HepG2 (cell line): ENCODE measurements at regions of chr4 and their contacts with region 1.

Region 1: GRCh38 chr4:184347251-184348239 is 126.8 kb downstream of the IRF2 start:
- DNase-seq: no peak
- ATAC-seq: peak; percentile 1; the same call in 2 of the 3 replicates
- H3K4me3 ChIP-seq: peak overlapping the region; percentile 47 to 71 (median 62)
- H3K27ac ChIP-seq: peak overlapping the region; percentile 100
- H3K4me1 ChIP-seq: peaks cover 91% of the 10 kb centered on the region
- H3K27me3 ChIP-seq: no peaks in the 10 kb centered on the region
- CTCF ChIP-seq: no peak
- EP300 ChIP-seq: no peak
- POLR2A ChIP-seq: peak; percentile 25 to 37; a peak in 2 of 4 replicates
- RAD21 ChIP-seq: no peak

Region 2: GRCh38 chr4:184168406-184169019 is 179.0 kb before region 1 on chr4:
- CTCF ChIA-PET with region 1: no interaction called
- POLR2A ChIA-PET with region 1: no interaction called
- in situ Hi-C with region 1: no loop called
- intact Hi-C with region 1: no loop called
- DNase-seq: peak; percentile 26
- ATAC-seq: peak; percentile 98
- H3K4me3 ChIP-seq: no peak overlapping the region
- H3K27ac ChIP-seq: no peak overlapping the region
- H3K4me1 ChIP-seq: no peaks in the 10 kb centered on the region
- H3K27me3 ChIP-seq: peaks cover 0 to 8% of the 10 kb centered on the region in 2 experiments; a peak in 2 of 5 replicates
- CTCF ChIP-seq: peak; percentile 95
- EP300 ChIP-seq: no peak
- POLR2A ChIP-seq: no peak
- RAD21 ChIP-seq: peak; percentile 96

Region 3: GRCh38 chr4:184287697-184288255 is 59.8 kb before region 1 on chr4:
- CTCF ChIA-PET with region 1: no interaction called
- POLR2A ChIA-PET with region 1: interaction called, 5 read pairs
- in situ Hi-C with region 1: no loop called
- intact Hi-C with region 1: loop called (anchors 5 kb)
- DNase-seq: peak; percentile 64
- ATAC-seq: peak; percentile 92
- H3K4me3 ChIP-seq: peak overlapping the region; percentile 38 to 47 (median 44); a peak in 5 of 6 replicates
- H3K27ac ChIP-seq: peak overlapping the region; percentile 44
- H3K4me1 ChIP-seq: peaks cover 58% of the 10 kb centered on the region
- H3K27me3 ChIP-seq: no peaks in the 10 kb centered on the region
- CTCF ChIP-seq: peak; percentile 75
- EP300 ChIP-seq: no peak; a peak in 1 of 4 replicates
- POLR2A ChIP-seq: no peak
- RAD21 ChIP-seq: peak; percentile 43; the same call in 1 of the 2 replicates

Region 4: GRCh38 chr4:184364100-184364921 is 16.8 kb after region 1 on chr4:
- CTCF ChIA-PET with region 1: no interaction called
- POLR2A ChIA-PET with region 1: interaction called, 34 read pairs
- in situ Hi-C with region 1: no loop called
- intact Hi-C with region 1: loop called (anchors 1 kb)
- DNase-seq: peak; percentile 97
- ATAC-seq: peak; percentile 97
- H3K4me3 ChIP-seq: peak overlapping the region in 1 of 3 experiments; percentile 43; a peak in 2 of 6 replicates
- H3K27ac ChIP-seq: peak overlapping the region; percentile 81
- H3K4me1 ChIP-seq: peaks cover 49% of the 10 kb centered on the region
- H3K27me3 ChIP-seq: no peaks in the 10 kb centered on the region
- CTCF ChIP-seq: 0 out of 2 replicates have a peak, but pooled peaks have one; percentile 2
- EP300 ChIP-seq: peak in 1 of 2 experiments; percentile 93; a peak in 2 of 4 replicates
- POLR2A ChIP-seq: peak in 1 of 2 experiments; percentile 56; a peak in 2 of 4 replicates
- RAD21 ChIP-seq: no peak

Region 5: DNA sequence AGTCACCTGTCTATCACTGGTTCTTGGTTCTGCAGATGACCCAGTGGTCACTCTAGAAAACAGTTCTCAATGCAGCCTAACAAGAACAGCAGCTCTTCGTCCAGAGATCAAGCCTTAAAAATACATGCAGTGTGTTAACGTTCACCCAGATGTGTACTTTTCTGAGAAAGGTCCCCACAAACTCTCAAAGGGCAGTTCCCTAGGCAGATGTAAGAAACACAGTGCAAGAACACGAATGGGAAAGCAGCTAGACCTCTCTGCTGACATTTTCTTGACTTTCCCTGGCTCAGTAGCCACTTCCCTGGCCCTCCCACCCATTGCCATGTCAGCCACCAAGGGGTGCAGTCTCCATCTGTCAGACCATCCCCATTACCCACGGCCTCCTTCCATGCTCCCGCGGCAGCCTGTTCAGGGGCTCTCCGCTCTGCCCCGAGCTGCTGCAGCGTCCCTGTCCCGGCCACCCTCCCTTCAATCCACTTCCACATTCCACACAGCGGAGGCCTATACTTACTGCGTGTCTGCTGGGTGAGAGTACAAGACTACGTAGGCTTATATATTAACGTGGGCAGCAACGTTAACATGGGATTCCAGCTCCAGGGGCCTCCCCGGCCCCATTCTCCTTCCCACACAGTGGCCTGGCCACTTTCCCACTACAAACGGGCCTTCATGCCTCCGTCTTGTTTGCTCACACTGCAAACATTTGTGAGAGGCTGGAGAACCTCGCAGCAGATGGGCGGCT is 92.5 kb after region 1 on chr4:
- CTCF ChIA-PET with region 1: no interaction called
- POLR2A ChIA-PET with region 1: interaction called, 19 read pairs
- in situ Hi-C with region 1: no loop called
- intact Hi-C with region 1: loop called (anchors 1 kb)
- DNase-seq: peak; percentile 79
- ATAC-seq: peak; percentile 94
- H3K4me3 ChIP-seq: peak overlapping the region; percentile 51 to 70 (median 55)
- H3K27ac ChIP-seq: peak overlapping the region; percentile 84
- H3K4me1 ChIP-seq: peaks cover 63% of the 10 kb centered on the region
- H3K27me3 ChIP-seq: no peaks in the 10 kb centered on the region
- CTCF ChIP-seq: 0 out of 2 replicates have a peak, but pooled peaks have one; percentile 2
- EP300 ChIP-seq: peak in 1 of 2 experiments; percentile 55; a peak in 2 of 4 replicates
- POLR2A ChIP-seq: peak in 1 of 2 experiments; percentile 58; a peak in 3 of 4 replicates
- RAD21 ChIP-seq: peak; percentile 25; the same call in 1 of the 2 replicates